Activated CD4-positive, alpha-beta T cell treated with anti-CD3 and anti-CD28 coated beads for 36 hours (primary cell): ENCODE measurements at regions of chr12 and their contacts with region 1.

Region 1: GRCh38 chr12:38070857-38071256 is 245.7 kb upstream of the ALG10B start:
- DNase-seq: no peak
- ATAC-seq: no peak
- H3K4me3 Mint-ChIP-seq: no peak overlapping the region
- H3K27ac Mint-ChIP-seq: no peak overlapping the region
- H3K4me1 Mint-ChIP-seq: no peaks in the 10 kb centered on the region
- H3K27me3 Mint-ChIP-seq: no peaks in the 10 kb centered on the region

Region 2: GRCh38 chr12:38053655-38054464 is 17.0 kb before region 1 on chr12:
- CTCF ChIA-PET with region 1: no interaction called
- POLR2A ChIA-PET with region 1: no interaction called
- intact Hi-C with region 1: no loop called
- DNase-seq: peak; percentile 40
- ATAC-seq: no peak
- H3K4me3 Mint-ChIP-seq: no peak overlapping the region
- H3K27ac Mint-ChIP-seq: no peak overlapping the region
- H3K4me1 Mint-ChIP-seq: no peaks in the 10 kb centered on the region
- H3K27me3 Mint-ChIP-seq: no peaks in the 10 kb centered on the region

Region 3: GRCh38 chr12:38384816-38385378 is 314.0 kb after region 1 on chr12:
- CTCF ChIA-PET with region 1: no interaction called
- POLR2A ChIA-PET with region 1: no interaction called
- intact Hi-C with region 1: loop called in 1 of 2 experiments (anchors 10 kb)
- DNase-seq: peak; percentile 5
- ATAC-seq: no peak
- H3K4me3 Mint-ChIP-seq: no peak overlapping the region
- H3K27ac Mint-ChIP-seq: no peak overlapping the region
- H3K4me1 Mint-ChIP-seq: no peaks in the 10 kb centered on the region
- H3K27me3 Mint-ChIP-seq: no peaks in the 10 kb centered on the region